ENCODE measurements at regions of chr13 and their contacts with region 1.

Region 1: GRCh38 chr13:75864718-75865117 is 228.6 kb downstream of the LMO7 start:
- DNase-seq: no peak
- ATAC-seq: no peak

Region 2: GRCh38 chr13:75679459-75679858 is 185.3 kb before region 1 on chr13:
- intact Hi-C with region 1: no loop called
- DNase-seq: no peak
- ATAC-seq: no peak

Region 3: DNA sequence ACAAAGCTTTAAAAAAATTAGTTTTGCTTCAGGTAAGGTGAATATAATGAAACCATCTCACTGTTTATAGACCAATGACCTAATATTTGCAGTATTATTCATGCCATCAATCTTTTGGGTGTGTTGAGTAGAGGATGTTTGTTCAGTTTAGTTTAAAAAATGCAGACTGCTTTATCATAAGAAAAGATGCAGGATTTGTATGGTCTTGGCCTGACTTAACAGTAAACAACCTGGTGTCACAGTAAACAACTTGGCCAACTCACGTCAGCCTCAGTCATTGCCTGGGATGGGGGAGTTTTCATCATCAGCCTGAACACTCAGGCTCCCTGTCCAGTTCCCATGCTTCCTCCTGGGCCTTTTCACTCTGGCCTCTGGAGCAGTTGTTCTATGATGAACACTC is 173.5 kb before region 1 on chr13:
- intact Hi-C with region 1: loop called in 1 of 2 experiments (anchors 10 kb)
- DNase-seq: no peak
- ATAC-seq: no peak